ENCODE measurements at regions of chr1 and their contacts with region 1.

Region 1: DNA sequence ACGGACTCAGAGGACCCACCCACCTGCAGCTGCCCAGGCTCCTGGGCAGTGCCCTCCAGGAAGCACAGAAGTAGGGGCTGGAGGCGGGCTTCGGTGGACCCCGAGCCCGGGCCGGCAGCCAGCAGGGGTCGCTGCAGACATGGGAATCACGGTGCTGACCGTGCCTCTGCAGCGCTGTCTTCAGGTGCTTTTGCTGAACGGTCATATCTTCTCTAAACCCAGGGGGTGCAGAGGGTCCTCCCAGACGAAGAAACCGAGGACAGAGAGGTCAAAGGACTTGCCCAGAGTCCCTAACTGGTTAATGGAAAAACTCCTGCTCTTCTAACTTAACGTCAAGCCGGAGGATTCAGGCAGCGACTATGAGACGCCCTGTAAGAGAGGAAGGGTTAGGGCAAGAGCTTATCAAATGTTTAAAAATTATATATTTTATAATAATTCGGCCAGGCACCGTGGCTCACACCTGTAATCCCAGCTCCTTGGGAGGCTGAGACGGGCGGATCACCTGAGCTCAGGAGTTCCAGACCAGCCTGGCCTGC is 21.5 kb upstream of the LEFTY2 start:
- DNase-seq: peak; percentile 72
- ATAC-seq: peak; percentile 95
- H3K4me3 Mint-ChIP-seq: no peak overlapping the region
- H3K27ac Mint-ChIP-seq: no peak overlapping the region
- H3K4me1 Mint-ChIP-seq: peaks cover 4% of the 10 kb centered on the region
- H3K27me3 Mint-ChIP-seq: no peaks in the 10 kb centered on the region

Region 2: GRCh38 chr1:225944951-225945350 is 17.6 kb before region 1 on chr1:
- CTCF ChIA-PET with region 1: interaction called, 22 read pairs
- POLR2A ChIA-PET with region 1: no interaction called
- DNase-seq: no peak
- ATAC-seq: peak; percentile 77
- H3K4me3 Mint-ChIP-seq: no peak overlapping the region
- H3K27ac Mint-ChIP-seq: peak overlapping the region; percentile 82
- H3K4me1 Mint-ChIP-seq: peaks cover 15% of the 10 kb centered on the region
- H3K27me3 Mint-ChIP-seq: peaks cover 19% of the 10 kb centered on the region

Region 3: GRCh38 chr1:225987491-225988316 is 25.2 kb after region 1 on chr1:
- CTCF ChIA-PET with region 1: interaction called, 20 read pairs
- POLR2A ChIA-PET with region 1: interaction called, 3 read pairs
- DNase-seq: no peak
- ATAC-seq: no peak
- H3K4me3 Mint-ChIP-seq: no peak overlapping the region
- H3K27ac Mint-ChIP-seq: no peak overlapping the region
- H3K4me1 Mint-ChIP-seq: peaks cover 32% of the 10 kb centered on the region
- H3K27me3 Mint-ChIP-seq: no peaks in the 10 kb centered on the region